ENCODE measurements at regions of chr16 and their contacts with region 1.

Region 1: DNA sequence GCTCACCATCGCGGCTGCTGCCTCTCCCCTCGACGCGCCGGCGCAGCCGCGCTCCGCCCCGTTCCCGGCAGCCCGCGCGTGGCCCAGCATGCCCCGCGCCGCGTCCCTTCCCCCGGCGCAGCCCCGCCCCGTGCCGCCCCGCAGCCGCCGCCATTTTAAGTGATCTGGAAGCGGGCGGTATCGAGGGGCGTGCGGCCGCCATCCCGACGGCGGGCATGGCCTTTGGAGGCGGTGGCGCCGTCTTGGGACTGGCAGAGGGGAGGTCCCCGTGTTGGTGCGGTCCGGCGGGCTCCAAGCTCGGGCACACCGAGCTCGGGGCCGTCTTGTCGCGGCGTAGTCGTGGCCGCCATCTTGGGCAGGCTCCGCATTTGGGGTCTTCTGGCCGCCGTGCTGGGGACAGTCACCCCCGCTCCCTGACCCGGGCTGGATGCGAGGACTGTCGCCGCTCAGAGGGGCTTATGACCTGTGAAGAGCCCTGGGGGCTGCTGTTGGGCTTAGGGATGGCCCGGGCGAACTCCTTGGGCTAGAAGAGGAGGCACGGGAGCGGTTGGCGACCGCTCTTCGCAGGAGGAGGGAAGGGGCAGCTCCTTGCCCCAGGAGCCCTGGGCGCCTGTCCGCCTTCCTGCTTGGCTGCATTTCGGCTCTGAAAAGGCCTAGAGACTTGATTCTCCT is at the start of gene ELOB:
- DNase-seq: peak; percentile 92
- ATAC-seq: peak; percentile 95
- H3K4me3 ChIP-seq: peak within 1 kb of the TSS; percentile 53 to 97 (median 93)
- H3K4me3 Mint-ChIP-seq: peak within 1 kb of the TSS; percentile 96
- H3K27ac ChIP-seq: peak within 1 kb of the TSS; percentile 98 to 99
- H3K27ac Mint-ChIP-seq: peak within 1 kb of the TSS; percentile 98
- H3K4me1 ChIP-seq: peaks cover 17 to 29% of the 10 kb centered on the region in 2 donors
- H3K4me1 Mint-ChIP-seq: peaks cover 27% of the 10 kb centered on the region
- H3K27me3 ChIP-seq: no peaks in the 10 kb centered on the region
- H3K27me3 Mint-ChIP-seq: no peaks in the 10 kb centered on the region
- CTCF ChIP-seq: no peak
- total RNA-seq, gene ELOB: 84.4 and 93.1 TPM in 2 replicates

Region 2: DNA sequence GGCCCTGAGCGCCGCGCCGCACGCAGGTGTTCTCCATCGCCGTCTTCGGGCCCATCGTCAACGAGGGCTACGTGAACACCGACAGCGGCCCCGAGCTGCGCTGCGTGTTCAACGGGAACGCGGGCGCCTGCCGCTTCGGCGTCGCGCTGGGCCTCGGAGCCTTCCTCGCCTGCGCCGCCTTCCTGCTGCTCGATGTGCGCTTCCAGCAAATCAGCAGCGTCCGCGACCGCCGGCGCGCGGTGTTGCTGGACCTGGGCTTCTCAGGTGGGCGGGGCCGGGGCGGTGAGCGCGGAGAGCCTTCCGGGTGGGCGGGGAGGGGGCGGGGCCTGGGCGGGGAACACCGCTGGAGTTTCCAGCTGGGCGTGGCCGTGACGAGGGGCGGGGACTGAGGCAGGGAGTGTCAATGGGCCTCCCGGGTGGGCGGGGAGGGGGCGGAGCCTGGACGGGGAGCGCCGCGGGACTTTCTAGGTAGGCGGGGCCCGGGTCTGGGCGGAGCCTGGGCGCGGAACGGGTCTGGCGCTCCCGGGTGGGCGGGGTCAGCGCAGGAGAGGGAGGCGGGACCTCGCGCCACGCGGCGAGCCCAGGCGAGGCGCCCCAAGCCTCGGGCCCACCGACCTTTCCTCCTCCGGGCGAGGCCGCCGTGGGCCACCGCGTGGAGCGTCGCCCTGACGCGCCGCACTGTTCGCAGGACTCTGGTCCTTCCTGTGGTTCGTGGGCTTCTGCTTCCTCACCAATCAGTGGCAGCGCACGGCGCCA is 785.2 kb before region 1 on chr16:
- CTCF ChIA-PET with region 1: no interaction called
- POLR2A ChIA-PET with region 1: no interaction called
- intact Hi-C with region 1: loop called (anchors 5 kb)
- DNase-seq: peak; percentile 96
- ATAC-seq: peak; percentile 77
- H3K4me3 ChIP-seq: peak overlapping the region in 4 of 5 experiments; percentile 51 to 93 (median 69)
- H3K4me3 Mint-ChIP-seq: peak overlapping the region; percentile 91
- H3K27ac ChIP-seq: peak overlapping the region; percentile 86 to 92
- H3K27ac Mint-ChIP-seq: peak overlapping the region; percentile 97
- H3K4me1 ChIP-seq: peaks cover 24 to 35% of the 10 kb centered on the region in 2 donors
- H3K4me1 Mint-ChIP-seq: peaks cover 33% of the 10 kb centered on the region
- H3K27me3 ChIP-seq: no peaks in the 10 kb centered on the region
- H3K27me3 Mint-ChIP-seq: no peaks in the 10 kb centered on the region
- CTCF ChIP-seq: no peak

Region 3: DNA sequence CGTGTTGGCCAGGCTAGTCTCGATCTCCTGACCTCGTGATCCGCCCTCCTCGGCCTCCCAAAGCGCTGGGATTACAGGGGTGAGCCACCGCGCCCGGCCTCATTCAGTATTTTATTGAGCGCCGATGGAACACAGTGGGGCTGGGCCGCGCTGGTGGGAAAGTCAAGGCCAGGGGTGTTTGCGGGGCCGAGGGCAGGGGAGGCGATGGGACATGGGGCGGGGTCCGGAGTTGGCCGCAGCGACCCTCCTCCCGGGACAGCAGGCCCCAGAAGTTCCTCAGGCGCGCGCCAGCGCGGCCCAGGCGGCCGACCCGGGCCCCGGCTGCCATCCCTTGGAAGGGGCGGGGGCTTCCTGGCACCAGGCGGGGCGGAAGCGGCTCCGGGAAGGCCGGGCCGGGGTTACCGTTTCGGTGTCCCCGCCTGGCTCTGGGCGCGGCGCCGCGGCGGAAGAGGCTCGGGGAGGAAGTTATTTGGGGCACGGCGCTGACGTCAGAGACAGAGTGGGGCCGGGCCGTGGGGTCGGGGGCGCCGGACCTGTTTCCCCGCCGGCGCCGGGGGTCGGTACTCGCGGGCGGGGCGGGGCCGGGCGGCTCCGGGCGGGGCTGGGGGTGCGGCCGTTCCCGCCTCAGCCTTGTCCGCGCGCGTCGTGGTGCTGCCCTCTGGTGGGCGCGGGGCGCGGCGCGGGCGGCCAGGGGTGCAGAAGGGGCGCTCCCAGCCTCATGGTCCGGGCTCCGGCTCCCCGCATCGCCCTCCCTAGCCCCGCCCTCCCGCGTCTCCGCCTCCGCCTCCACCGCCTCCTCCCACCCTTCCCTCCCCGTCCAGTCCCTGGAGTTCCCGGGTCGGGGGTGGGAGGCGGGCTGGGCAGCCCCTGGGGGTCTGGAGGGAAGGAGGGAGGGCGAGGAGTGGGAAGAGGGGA is 56.4 kb before region 1 on chr16:
- CTCF ChIA-PET with region 1: no interaction called
- POLR2A ChIA-PET with region 1: interaction called, 3 read pairs
- intact Hi-C with region 1: loop called (anchors 2 kb)
- DNase-seq: peak; percentile 91
- ATAC-seq: peak; percentile 92
- H3K4me3 ChIP-seq: peak overlapping the region in 4 of 5 experiments; percentile 49 to 70 (median 65)
- H3K4me3 Mint-ChIP-seq: peak overlapping the region; percentile 83
- H3K27ac ChIP-seq: peak overlapping the region; percentile 12 to 67
- H3K27ac Mint-ChIP-seq: peak overlapping the region; percentile 82
- H3K4me1 ChIP-seq: peaks cover 3 to 13% of the 10 kb centered on the region in 2 donors
- H3K4me1 Mint-ChIP-seq: peaks cover 4% of the 10 kb centered on the region
- H3K27me3 ChIP-seq: peaks cover 0 to 9% (median 4%) of the 10 kb centered on the region in 4 experiments
- H3K27me3 Mint-ChIP-seq: peaks cover 12% of the 10 kb centered on the region
- CTCF ChIP-seq: peak; percentile 88

Region 4: GRCh38 chr16:2810651-2811050 is 33.3 kb after region 1 on chr16:
- CTCF ChIA-PET with region 1: no interaction called
- POLR2A ChIA-PET with region 1: no interaction called
- intact Hi-C with region 1: no loop called
- DNase-seq: no peak
- ATAC-seq: no peak
- H3K4me3 ChIP-seq: no peak overlapping the region
- H3K4me3 Mint-ChIP-seq: no peak overlapping the region
- H3K27ac ChIP-seq: no peak overlapping the region
- H3K27ac Mint-ChIP-seq: no peak overlapping the region
- H3K4me1 ChIP-seq: no peaks in the 10 kb centered on the region
- H3K4me1 Mint-ChIP-seq: no peaks in the 10 kb centered on the region
- H3K27me3 ChIP-seq: peaks cover 0 to 14% (median 2%) of the 10 kb centered on the region in 4 experiments
- H3K27me3 Mint-ChIP-seq: peaks cover 46% of the 10 kb centered on the region
- CTCF ChIP-seq: no peak

Region 5: DNA sequence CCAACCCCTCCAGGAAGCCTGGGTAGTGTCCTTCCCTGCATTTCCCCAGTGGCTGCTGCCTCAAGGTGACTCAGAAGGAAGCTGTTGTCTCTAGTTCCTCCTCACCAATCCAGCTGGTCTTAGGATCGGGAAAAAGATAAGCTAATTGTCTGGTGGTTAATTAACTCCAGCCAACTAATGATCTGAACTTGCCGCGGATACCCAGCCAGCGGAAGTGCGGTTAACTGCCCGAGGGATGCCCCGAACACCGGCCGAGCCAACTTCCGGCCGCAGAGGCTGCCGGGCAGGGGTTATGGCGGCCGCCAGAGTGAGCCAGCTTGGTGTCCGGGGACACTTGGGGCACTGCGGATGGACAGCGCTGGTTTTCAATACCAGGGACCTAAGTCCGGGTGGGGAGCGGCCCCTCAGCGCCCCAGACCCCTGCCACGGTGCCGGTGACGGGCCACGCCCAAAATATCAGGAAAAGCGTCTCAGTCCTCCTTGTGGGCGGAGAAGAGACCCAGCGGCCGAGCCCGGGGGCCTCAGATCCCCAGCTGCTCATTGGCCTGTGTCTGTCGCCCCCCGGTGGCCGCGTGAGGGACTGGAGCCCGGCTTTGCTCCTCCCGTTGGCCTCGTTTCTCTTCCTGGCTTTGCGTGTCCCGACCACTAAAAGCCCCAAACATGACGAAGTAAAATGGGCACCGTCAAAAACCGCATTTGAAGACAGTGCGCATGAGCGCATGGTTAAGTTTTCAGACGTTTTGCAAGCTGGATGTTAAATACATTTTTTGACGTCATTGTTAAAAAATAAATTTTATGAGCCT is 90.8 kb after region 1 on chr16:
- CTCF ChIA-PET with region 1: interaction called, 6 read pairs
- POLR2A ChIA-PET with region 1: interaction called, 8 read pairs
- intact Hi-C with region 1: loop called (anchors 10 kb)
- DNase-seq: peak; percentile 94
- ATAC-seq: peak; percentile 95
- H3K4me3 ChIP-seq: peak overlapping the region; percentile 47 to 83 (median 71)
- H3K4me3 Mint-ChIP-seq: peak overlapping the region; percentile 94
- H3K27ac ChIP-seq: peak overlapping the region; percentile 78 to 85
- H3K27ac Mint-ChIP-seq: peak overlapping the region; percentile 92
- H3K4me1 ChIP-seq: peaks cover 0 to 10% of the 10 kb centered on the region in 2 donors
- H3K4me1 Mint-ChIP-seq: peaks cover 9% of the 10 kb centered on the region
- H3K27me3 ChIP-seq: peaks cover 0 to 3% (median 0%) of the 10 kb centered on the region in 4 experiments
- H3K27me3 Mint-ChIP-seq: peaks cover 17% of the 10 kb centered on the region
- CTCF ChIP-seq: peak; percentile 97

Region 6: DNA sequence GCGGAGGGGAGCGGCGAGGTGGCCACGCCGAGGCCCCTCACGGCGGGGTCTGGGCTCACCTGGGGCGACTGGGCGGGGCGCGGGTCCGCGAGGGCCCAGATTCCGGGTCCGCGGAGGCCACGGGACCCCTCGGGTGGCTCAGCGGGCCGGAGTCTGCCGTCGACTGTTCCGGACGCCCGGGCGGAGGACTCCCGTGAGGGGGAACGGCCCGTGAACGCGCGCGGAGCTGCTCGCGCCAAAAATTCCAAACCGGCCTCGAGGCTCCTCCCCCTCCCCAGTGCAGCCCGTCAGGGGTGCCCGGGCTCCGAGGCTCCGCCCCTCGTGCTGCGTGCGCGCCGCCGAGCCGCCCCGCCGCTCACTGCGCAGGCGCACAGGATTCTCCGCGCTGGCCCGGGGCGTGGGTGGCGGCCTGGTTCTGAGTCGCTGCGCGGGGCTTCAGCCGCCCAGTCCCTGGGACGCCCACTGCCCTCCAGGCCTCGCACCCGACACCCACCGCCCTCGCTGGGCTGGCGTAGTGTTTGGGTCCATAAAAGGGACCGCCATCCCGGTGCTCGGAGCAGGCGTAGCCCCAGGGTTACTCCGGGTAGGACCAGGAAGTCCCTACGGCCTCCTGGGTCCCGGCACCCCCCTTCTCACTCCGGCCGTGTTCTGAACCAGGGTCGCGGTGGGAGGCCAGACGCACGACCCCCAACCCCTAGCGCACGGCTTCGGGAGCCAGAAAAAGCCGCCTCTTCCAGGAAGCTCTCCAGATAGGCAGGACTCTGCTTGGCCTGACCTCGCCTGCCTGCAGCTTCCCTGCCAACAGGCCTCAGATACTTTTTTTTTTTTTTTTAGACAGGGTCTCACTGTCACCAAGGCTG is 203.1 kb after region 1 on chr16 and contains the start of gene PKMYT1:
- CTCF ChIA-PET with region 1: no interaction called
- POLR2A ChIA-PET with region 1: no interaction called
- intact Hi-C with region 1: loop called (anchors 5 kb)
- DNase-seq: peak; percentile 96
- ATAC-seq: peak; percentile 93
- H3K4me3 ChIP-seq: peak within 1 kb of the TSS; percentile 57 to 96 (median 82)
- H3K4me3 Mint-ChIP-seq: peak within 1 kb of the TSS; percentile 81
- H3K27ac ChIP-seq: peak within 1 kb of the TSS; percentile 71 to 83
- H3K27ac Mint-ChIP-seq: peak within 1 kb of the TSS; percentile 84
- H3K4me1 ChIP-seq: peaks cover 18 to 39% of the 10 kb centered on the region in 2 donors
- H3K4me1 Mint-ChIP-seq: peaks cover 21% of the 10 kb centered on the region
- H3K27me3 ChIP-seq: peaks cover 0 to 8% (median 1%) of the 10 kb centered on the region in 4 experiments
- H3K27me3 Mint-ChIP-seq: no peaks in the 10 kb centered on the region
- CTCF ChIP-seq: no peak
- total RNA-seq, gene PKMYT1: 0.67 and 1.0 TPM in 2 replicates